Motor neuron (in vitro differentiated cells): ENCODE measurements at regions of chr7 and their contacts with region 1.

Region 1: DNA sequence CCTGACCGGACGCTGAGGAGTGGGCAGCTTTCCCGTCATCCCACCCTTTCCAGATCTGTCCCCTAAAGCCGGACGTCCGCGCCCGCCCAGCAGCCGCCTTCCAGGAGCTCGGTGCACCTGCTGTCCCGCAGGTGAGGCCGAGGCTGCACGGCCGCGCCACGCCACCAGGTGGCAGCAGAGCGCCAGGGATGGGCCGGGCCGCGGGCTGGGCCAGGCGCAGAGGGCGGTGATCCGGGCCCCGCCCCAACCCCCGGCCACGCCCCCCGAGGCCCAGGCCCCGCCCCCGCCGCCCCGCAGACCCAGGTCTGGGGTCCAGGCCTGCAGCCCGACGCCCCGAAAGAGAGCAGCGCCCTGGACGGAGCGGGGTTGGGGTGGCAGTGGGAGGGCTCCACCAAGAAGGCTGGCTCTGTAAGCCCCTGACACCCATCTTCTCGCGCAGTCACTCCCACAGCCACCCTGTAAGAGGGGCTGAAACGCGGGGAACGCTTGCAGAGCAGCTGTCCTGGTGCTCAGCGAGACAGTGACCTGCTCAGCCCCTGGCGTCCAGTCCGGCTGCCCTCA is 32.2 kb downstream of the FOXL3 start:
- ATAC-seq: peak; percentile 79 to 95 (median 86)
- H3K4me3 ChIP-seq: peak overlapping the region in 3 of 5 donors; percentile 8 to 20 (median 14)
- H3K27ac ChIP-seq: no peak overlapping the region
- H3K4me1 ChIP-seq: peaks cover 0 to 8% of the 10 kb centered on the region in 2 donors

Region 2: GRCh38 chr7:774161-775109 is 452.2 kb after region 1 on chr7:
- in situ Hi-C with region 1: loop called in 2 of 9 experiments (anchors 10 kb)
- ATAC-seq: peak; percentile 19 to 75 (median 62)
- H3K4me3 ChIP-seq: no peak overlapping the region
- H3K27ac ChIP-seq: no peak overlapping the region
- H3K4me1 ChIP-seq: no peaks in the 10 kb centered on the region